ENCODE measurements at regions of chr3 and their contacts with region 1.

Region 1: DNA sequence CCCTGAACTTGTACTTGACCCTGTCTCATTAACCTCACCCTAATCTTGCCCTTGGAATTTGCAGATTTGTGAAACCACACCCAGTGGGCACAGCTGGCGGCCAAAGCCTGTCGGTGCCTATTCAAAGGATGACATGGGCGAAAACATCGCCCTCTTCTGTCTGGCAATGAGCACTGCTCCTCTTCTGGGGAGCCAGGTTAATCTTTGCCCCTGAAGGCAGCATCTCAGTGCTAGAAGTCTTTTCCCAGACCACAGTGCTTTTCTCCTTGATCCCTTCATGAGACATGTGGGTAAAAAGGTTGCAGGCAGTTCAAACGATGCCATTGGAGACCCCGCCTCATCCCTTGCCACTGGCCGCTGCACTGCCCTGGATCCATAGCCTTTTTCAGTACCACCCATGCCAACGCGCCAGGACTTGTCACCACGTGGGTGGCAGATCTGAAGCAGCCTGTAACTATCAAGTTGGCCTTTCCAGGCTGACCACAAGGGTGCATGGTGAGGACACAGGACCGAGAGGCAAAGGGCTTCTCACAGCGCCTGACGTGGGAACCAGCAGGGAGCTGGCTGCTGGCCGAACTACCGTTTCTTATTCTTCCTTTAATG is 6.5 kb upstream of the DNASE1L3 start:
- DNase-seq: peak; percentile 16 to 80 (median 55)
- ATAC-seq: peak; percentile 90
- H3K4me3 ChIP-seq: no peak overlapping the region
- H3K4me3 Mint-ChIP-seq: peak overlapping the region; percentile 16
- H3K27ac ChIP-seq: no peak overlapping the region
- H3K27ac Mint-ChIP-seq: no peak overlapping the region
- H3K4me1 ChIP-seq: peaks cover 4% of the 10 kb centered on the region
- H3K4me1 Mint-ChIP-seq: peaks cover 7% of the 10 kb centered on the region
- H3K27me3 ChIP-seq: no peaks in the 10 kb centered on the region
- H3K27me3 Mint-ChIP-seq: no peaks in the 10 kb centered on the region
- CTCF ChIP-seq: peak; percentile 78

Region 2: GRCh38 chr3:57998366-57999283 is 218.7 kb before region 1 on chr3:
- CTCF ChIA-PET with region 1: interaction called, 3 read pairs
- POLR2A ChIA-PET with region 1: no interaction called
- intact Hi-C with region 1: loop called in 1 of 2 experiments (anchors 1 kb)
- DNase-seq: no peak
- ATAC-seq: peak; percentile 38
- H3K4me3 ChIP-seq: peak overlapping the region; percentile 13 to 28
- H3K4me3 Mint-ChIP-seq: peak overlapping the region; percentile 76
- H3K27ac ChIP-seq: no peak overlapping the region
- H3K27ac Mint-ChIP-seq: peak overlapping the region; percentile 6
- H3K4me1 ChIP-seq: peaks cover 8% of the 10 kb centered on the region
- H3K4me1 Mint-ChIP-seq: peaks cover 14% of the 10 kb centered on the region
- H3K27me3 ChIP-seq: no peaks in the 10 kb centered on the region
- H3K27me3 Mint-ChIP-seq: no peaks in the 10 kb centered on the region
- CTCF ChIP-seq: no peak

Region 3: GRCh38 chr3:58202917-58203360 is 14.4 kb before region 1 on chr3:
- CTCF ChIA-PET with region 1: interaction called, 10 read pairs
- POLR2A ChIA-PET with region 1: no interaction called
- intact Hi-C with region 1: no loop called
- DNase-seq: no peak
- ATAC-seq: no peak
- H3K4me3 ChIP-seq: no peak overlapping the region
- H3K4me3 Mint-ChIP-seq: no peak overlapping the region
- H3K27ac ChIP-seq: no peak overlapping the region
- H3K27ac Mint-ChIP-seq: no peak overlapping the region
- H3K4me1 ChIP-seq: no peaks in the 10 kb centered on the region
- H3K4me1 Mint-ChIP-seq: peaks cover 7% of the 10 kb centered on the region
- H3K27me3 ChIP-seq: no peaks in the 10 kb centered on the region
- H3K27me3 Mint-ChIP-seq: peaks cover 11% of the 10 kb centered on the region
- CTCF ChIP-seq: no peak

Region 4: GRCh38 chr3:58299839-58300516 is 82.7 kb after region 1 on chr3:
- CTCF ChIA-PET with region 1: no interaction called
- POLR2A ChIA-PET with region 1: no interaction called
- intact Hi-C with region 1: no loop called
- DNase-seq: peak in 2 of 9 experiments; percentile 23 to 29
- ATAC-seq: no peak
- H3K4me3 ChIP-seq: no peak overlapping the region
- H3K4me3 Mint-ChIP-seq: no peak overlapping the region
- H3K27ac ChIP-seq: no peak overlapping the region
- H3K27ac Mint-ChIP-seq: no peak overlapping the region
- H3K4me1 ChIP-seq: no peaks in the 10 kb centered on the region
- H3K4me1 Mint-ChIP-seq: peaks cover under 1% of the 10 kb centered on the region
- H3K27me3 ChIP-seq: no peaks in the 10 kb centered on the region
- H3K27me3 Mint-ChIP-seq: peaks cover 24% of the 10 kb centered on the region
- CTCF ChIP-seq: peak; percentile 13

Region 5: DNA sequence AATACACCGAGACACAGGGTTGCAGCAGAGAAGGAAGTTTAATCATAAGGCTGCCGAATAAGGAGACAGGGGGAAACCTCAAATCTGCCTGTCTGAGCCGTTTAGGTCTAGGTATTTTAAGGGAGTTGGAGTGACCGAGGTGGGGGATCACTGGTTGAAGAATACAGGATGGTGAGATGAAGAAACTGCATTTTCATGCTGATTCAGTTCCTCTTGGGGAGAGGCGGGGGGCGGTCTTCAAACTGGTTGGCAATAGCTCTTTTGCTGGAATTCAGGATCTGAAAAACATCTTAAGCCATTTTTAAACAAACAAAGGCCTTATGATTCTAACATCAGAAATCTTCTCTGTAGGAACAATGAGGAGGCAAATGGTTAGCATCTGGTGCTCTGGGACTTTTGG is 1532.0 kb after region 1 on chr3:
- CTCF ChIA-PET with region 1: no interaction called
- POLR2A ChIA-PET with region 1: no interaction called
- intact Hi-C with region 1: no loop called
- DNase-seq: no peak
- ATAC-seq: no peak
- H3K4me3 ChIP-seq: no peak overlapping the region
- H3K4me3 Mint-ChIP-seq: no peak overlapping the region
- H3K27ac ChIP-seq: no peak overlapping the region
- H3K27ac Mint-ChIP-seq: no peak overlapping the region
- H3K4me1 ChIP-seq: peaks cover 18% of the 10 kb centered on the region
- H3K4me1 Mint-ChIP-seq: peaks cover 20% of the 10 kb centered on the region
- H3K27me3 ChIP-seq: no peaks in the 10 kb centered on the region
- H3K27me3 Mint-ChIP-seq: no peaks in the 10 kb centered on the region
- CTCF ChIP-seq: no peak